ENCODE measurements at regions of chr2 and their contacts with region 1.

Region 1: GRCh38 chr2:178796079-178796677 is 11.0 kb downstream of the TTN start:
- DNase-seq: peak; percentile 54
- H3K4me3 Mint-ChIP-seq: no peak overlapping the region
- H3K27ac Mint-ChIP-seq: no peak overlapping the region
- H3K4me1 Mint-ChIP-seq: no peaks in the 10 kb centered on the region
- H3K27me3 Mint-ChIP-seq: peaks cover 23% of the 10 kb centered on the region
- CTCF ChIP-seq: peak; percentile 62

Region 2: GRCh38 chr2:178914259-178914849 is 118.2 kb after region 1 on chr2:
- CTCF ChIA-PET with region 1: interaction called, 9 read pairs
- POLR2A ChIA-PET with region 1: no interaction called
- intact Hi-C with region 1: loop called (anchors 1 kb)
- DNase-seq: peak; percentile 85
- H3K4me3 Mint-ChIP-seq: no peak overlapping the region
- H3K27ac Mint-ChIP-seq: no peak overlapping the region
- H3K4me1 Mint-ChIP-seq: peaks cover 16% of the 10 kb centered on the region
- H3K27me3 Mint-ChIP-seq: no peaks in the 10 kb centered on the region
- CTCF ChIP-seq: peak; percentile 70

Region 3: GRCh38 chr2:179129574-179130238 is 333.5 kb after region 1 on chr2:
- CTCF ChIA-PET with region 1: interaction called, 9 read pairs
- POLR2A ChIA-PET with region 1: no interaction called
- intact Hi-C with region 1: loop called (anchors 1 kb)
- DNase-seq: peak; percentile 29
- H3K4me3 Mint-ChIP-seq: no peak overlapping the region
- H3K27ac Mint-ChIP-seq: no peak overlapping the region
- H3K4me1 Mint-ChIP-seq: no peaks in the 10 kb centered on the region
- H3K27me3 Mint-ChIP-seq: no peaks in the 10 kb centered on the region
- CTCF ChIP-seq: peak; percentile 43

Region 4: DNA sequence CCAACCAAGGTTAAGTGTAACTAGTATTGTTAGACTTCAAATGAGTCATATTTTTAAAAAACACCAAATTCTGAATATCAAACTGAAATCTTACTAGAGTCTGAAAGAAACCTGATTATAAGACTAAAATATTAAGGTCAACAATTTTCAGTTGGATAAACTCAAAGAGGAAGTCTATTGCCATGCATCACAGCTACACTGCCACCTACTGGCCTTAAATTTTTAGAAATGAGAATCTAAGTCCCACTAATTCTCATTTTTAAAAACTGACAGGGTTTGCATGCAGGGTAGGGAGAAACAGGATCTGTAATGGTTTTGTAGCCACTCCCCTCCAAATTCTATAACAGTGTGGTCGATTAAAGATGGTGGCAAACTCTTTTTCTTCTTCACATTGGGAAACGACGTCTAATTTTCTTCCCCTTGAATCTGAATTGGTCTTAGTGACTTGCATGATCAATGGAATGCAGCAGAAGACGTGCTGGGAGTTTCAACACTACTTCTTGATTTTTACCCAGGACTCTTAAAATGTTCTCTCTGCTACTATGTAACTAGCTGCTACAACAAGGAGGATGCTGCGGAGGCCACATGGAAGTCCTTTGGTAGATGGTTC is 644.6 kb after region 1 on chr2:
- CTCF ChIA-PET with region 1: no interaction called
- POLR2A ChIA-PET with region 1: no interaction called
- intact Hi-C with region 1: loop called (anchors 1 kb)
- DNase-seq: peak; percentile 43
- H3K4me3 Mint-ChIP-seq: no peak overlapping the region
- H3K27ac Mint-ChIP-seq: no peak overlapping the region
- H3K4me1 Mint-ChIP-seq: peaks cover 11% of the 10 kb centered on the region
- H3K27me3 Mint-ChIP-seq: no peaks in the 10 kb centered on the region
- CTCF ChIP-seq: peak; percentile 53